CD8-positive, alpha-beta memory T cell (primary cell): ENCODE measurements at regions of chr14 and their contacts with region 1.

Region 1: GRCh38 chr14:21014761-21015190 is 10.1 kb downstream of the NDRG2 start:
- DNase-seq: peak; percentile 66 to 86 (median 75)
- H3K4me3 ChIP-seq: no peak overlapping the region
- H3K4me3 Mint-ChIP-seq: no peak overlapping the region
- H3K27ac ChIP-seq: no peak overlapping the region
- H3K27ac Mint-ChIP-seq: peak overlapping the region in 1 of 8 donors; percentile 8
- H3K4me1 ChIP-seq: no peaks in the 10 kb centered on the region
- H3K4me1 Mint-ChIP-seq: no peaks in the 10 kb centered on the region
- H3K27me3 ChIP-seq: no peaks in the 10 kb centered on the region
- H3K27me3 Mint-ChIP-seq: peaks cover 14 to 23% of the 10 kb centered on the region in 2 donors

Region 2: DNA sequence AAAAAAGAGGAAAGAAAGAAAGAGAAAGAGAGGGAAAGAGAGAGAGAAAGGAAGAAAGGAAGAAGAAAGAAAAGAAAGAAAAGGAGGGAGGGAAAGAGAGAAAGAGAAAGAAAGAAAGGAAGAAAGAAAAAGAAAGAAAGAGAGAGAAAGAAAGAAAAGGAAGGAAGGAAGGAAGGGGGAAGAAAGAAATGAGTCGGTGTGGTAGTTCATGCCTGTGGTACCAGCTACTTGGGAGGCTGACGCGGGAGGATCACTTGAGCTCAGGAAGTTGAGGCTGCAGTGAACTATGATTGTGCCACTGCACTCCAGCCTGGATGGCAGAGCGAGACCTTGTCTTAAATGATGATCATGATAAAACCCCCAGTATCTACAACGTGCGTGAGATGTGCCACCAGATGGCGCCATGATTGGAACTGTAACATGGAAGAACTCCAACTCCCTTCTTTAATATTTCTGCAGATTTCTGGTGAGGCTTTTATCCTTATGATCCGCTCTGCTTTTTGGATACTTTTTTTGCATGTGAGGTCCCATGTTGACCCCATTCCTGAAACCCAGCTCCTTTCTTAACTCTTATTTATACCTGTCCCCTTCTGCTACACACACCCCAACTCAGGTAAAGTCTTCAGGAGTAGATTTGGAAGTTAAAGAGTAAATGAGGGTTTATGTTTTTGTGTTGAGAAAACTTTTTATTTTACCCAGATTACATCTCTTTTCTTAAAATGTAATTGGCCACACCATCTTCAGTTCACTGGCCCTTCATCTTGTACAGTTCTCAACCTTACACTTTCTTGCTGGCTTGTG is 483.8 kb before region 1 on chr14:
- CTCF ChIA-PET with region 1: no interaction called
- POLR2A ChIA-PET with region 1: no interaction called
- DNase-seq: peak; percentile 39 to 80 (median 54)
- H3K4me3 ChIP-seq: no peak overlapping the region
- H3K4me3 Mint-ChIP-seq: peak overlapping the region in 3 of 7 donors; percentile 20 to 63 (median 22)
- H3K27ac ChIP-seq: no peak overlapping the region
- H3K27ac Mint-ChIP-seq: peak overlapping the region in 1 of 8 donors; percentile 43
- H3K4me1 ChIP-seq: peaks cover 8% of the 10 kb centered on the region
- H3K4me1 Mint-ChIP-seq: peaks cover 8 to 9% (median 8%) of the 10 kb centered on the region in 3 donors
- H3K27me3 ChIP-seq: no peaks in the 10 kb centered on the region
- H3K27me3 Mint-ChIP-seq: peaks cover 4 to 19% of the 10 kb centered on the region in 2 donors

Region 3: DNA sequence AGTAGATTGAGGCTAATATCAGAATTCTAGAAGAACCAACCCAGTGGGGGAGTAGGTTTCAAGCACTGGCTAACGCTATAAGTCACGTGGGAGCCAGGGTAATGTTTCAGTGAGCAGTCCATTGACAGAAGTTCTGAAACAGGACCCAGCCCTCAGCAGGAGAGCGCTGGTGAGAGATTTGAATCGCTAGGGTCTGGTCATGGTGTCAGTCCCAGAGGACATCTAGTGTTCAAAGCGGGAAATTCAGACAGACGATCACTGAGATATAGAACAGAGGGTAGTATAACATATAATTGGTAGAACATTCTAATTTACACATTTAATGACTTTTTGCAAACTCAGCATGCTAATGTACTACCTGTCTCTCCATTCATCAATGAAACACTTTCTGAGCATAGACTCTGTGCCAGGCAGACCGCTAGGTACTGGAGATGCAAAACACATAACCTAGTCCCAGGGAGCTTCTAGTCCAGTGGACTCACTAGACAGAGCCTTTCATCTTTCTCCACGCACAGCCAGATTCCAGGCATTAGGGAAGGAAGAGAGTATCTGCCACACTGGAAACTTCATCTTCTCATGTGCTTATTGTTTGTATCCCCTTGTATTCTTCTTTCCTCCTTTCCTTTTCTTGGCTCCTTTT is 159.0 kb before region 1 on chr14:
- CTCF ChIA-PET with region 1: no interaction called
- POLR2A ChIA-PET with region 1: no interaction called
- DNase-seq: peak in 4 of 5 donors; percentile 5 to 52 (median 38)
- H3K4me3 ChIP-seq: no peak overlapping the region
- H3K4me3 Mint-ChIP-seq: no peak overlapping the region
- H3K27ac ChIP-seq: no peak overlapping the region
- H3K27ac Mint-ChIP-seq: no peak overlapping the region
- H3K4me1 ChIP-seq: no peaks in the 10 kb centered on the region
- H3K4me1 Mint-ChIP-seq: peaks cover 0 to 5% (median 5%) of the 10 kb centered on the region in 3 donors
- H3K27me3 ChIP-seq: peaks cover 5% of the 10 kb centered on the region
- H3K27me3 Mint-ChIP-seq: peaks cover 14 to 32% of the 10 kb centered on the region in 2 donors

Region 4: GRCh38 chr14:20982646-20983369 is 32.0 kb before region 1 on chr14:
- CTCF ChIA-PET with region 1: no interaction called
- POLR2A ChIA-PET with region 1: no interaction called
- DNase-seq: no peak
- H3K4me3 ChIP-seq: no peak overlapping the region
- H3K4me3 Mint-ChIP-seq: no peak overlapping the region
- H3K27ac ChIP-seq: no peak overlapping the region
- H3K27ac Mint-ChIP-seq: no peak overlapping the region
- H3K4me1 ChIP-seq: no peaks in the 10 kb centered on the region
- H3K4me1 Mint-ChIP-seq: no peaks in the 10 kb centered on the region
- H3K27me3 ChIP-seq: peaks cover 3% of the 10 kb centered on the region
- H3K27me3 Mint-ChIP-seq: peaks cover 3 to 29% of the 10 kb centered on the region in 2 donors

Region 5: DNA sequence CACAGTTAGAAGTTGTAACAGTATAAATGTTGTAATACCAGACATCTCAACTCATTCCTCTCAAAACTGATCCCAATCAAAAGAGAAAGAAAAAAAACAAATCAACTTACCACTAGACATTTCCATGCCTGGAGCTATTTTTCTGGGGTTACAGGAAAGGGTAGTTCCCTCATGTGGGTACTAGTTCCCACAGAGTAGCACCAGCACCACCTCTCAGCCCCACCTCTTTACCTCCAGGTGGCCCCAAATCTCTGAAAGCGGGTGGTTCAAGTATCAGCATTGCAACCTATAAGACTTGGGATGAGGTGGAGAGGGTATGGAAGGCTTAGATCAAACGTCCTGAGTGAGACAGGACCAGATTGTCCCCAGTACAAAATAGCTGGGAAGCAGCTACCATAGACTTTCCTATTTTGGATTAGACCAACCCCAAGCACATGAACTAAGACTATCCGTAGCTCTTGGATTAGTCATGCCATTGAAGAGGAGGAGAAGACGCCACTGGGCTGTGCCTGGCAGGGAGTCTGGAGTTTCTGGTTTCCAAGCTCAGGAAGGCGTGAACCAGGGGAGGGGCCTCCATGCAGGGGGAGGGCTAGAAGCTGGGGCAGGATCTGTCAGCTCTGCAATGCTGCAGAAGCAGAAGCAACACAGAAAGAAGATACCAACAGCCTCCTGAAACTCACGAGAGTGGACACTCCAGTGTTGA is 16.0 kb before region 1 on chr14 and contains the start of gene SLC39A2:
- CTCF ChIA-PET with region 1: interaction called, 23 read pairs
- POLR2A ChIA-PET with region 1: no interaction called
- DNase-seq: no peak
- H3K4me3 ChIP-seq: no peak within 1 kb of the TSS
- H3K4me3 Mint-ChIP-seq: no peak within 1 kb of the TSS
- H3K27ac ChIP-seq: no peak within 1 kb of the TSS
- H3K27ac Mint-ChIP-seq: peak within 1 kb of the TSS in 4 of 8 donors; percentile 24 to 85 (median 30)
- H3K4me1 ChIP-seq: peaks cover 7% of the 10 kb centered on the region
- H3K4me1 Mint-ChIP-seq: peaks cover 0 to 1% (median 0%) of the 10 kb centered on the region in 3 donors
- H3K27me3 ChIP-seq: no peaks in the 10 kb centered on the region
- H3K27me3 Mint-ChIP-seq: peaks cover 0 to 2% of the 10 kb centered on the region in 2 donors
- total RNA-seq, gene SLC39A2: 0.16 TPM in 1 of 2 experiments, not detected in the other

Region 6: DNA sequence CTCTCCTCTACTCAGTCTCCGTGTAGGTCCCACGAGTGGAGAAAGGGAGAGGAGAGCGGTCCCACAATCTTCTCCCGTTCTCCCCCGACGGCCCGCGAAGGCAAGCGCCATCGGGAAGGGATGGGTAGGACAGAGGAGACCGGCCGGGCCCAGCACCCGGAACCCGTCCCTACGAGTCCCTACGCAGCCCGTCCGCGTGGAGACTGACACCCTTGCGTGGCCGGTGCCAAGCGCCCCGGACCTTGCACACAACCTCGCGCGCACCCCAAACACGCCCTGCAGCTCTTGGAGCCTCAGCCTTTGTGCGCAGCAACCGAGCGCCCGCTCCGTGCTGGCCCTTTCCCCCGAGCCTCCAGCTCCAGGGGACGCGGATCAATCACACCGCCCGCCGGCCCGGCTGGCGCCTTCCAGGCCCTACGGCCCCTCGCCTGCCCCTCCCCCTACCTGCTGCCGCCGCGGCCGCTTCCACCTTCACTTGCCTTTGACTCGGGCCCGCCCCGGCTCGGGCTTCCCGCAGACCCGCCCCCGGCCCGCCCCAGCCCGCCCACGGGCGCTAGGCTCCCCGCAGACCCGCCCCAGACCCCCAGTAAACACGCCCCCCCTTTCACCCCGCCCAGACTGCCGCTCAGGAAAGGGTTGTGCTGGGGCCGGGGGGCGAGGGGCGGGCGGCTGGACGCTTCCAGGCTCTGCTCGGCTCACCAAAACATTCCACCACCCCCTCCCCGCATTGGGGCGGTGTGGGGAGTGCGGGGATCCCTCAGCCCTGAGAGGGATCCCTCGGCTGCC is 10.0 kb after region 1 on chr14 and contains the start of gene NDRG2:
- CTCF ChIA-PET with region 1: interaction called, 17 read pairs
- POLR2A ChIA-PET with region 1: no interaction called
- DNase-seq: peak; percentile 66 to 86 (median 74)
- H3K4me3 ChIP-seq: peak within 1 kb of the TSS; percentile 71
- H3K4me3 Mint-ChIP-seq: peak within 1 kb of the TSS; percentile 82 to 95 (median 92)
- H3K27ac ChIP-seq: peak within 1 kb of the TSS; percentile 67
- H3K27ac Mint-ChIP-seq: peak within 1 kb of the TSS in 7 of 8 donors; percentile 51 to 96 (median 85)
- H3K4me1 ChIP-seq: peaks cover 13% of the 10 kb centered on the region
- H3K4me1 Mint-ChIP-seq: peaks cover 20 to 24% (median 23%) of the 10 kb centered on the region in 3 donors
- H3K27me3 ChIP-seq: no peaks in the 10 kb centered on the region
- H3K27me3 Mint-ChIP-seq: peaks cover 0 to 14% of the 10 kb centered on the region in 2 donors
- total RNA-seq, gene NDRG2: 4.8 to 5.0 TPM

Region 7: GRCh38 chr14:21049271-21049673 is 34.5 kb after region 1 on chr14:
- CTCF ChIA-PET with region 1: interaction called, 22 read pairs
- POLR2A ChIA-PET with region 1: no interaction called
- DNase-seq: no peak
- H3K4me3 ChIP-seq: no peak overlapping the region
- H3K4me3 Mint-ChIP-seq: no peak overlapping the region
- H3K27ac ChIP-seq: no peak overlapping the region
- H3K27ac Mint-ChIP-seq: no peak overlapping the region
- H3K4me1 ChIP-seq: peaks cover 3% of the 10 kb centered on the region
- H3K4me1 Mint-ChIP-seq: peaks cover 4 to 8% (median 6%) of the 10 kb centered on the region in 3 donors
- H3K27me3 ChIP-seq: no peaks in the 10 kb centered on the region
- H3K27me3 Mint-ChIP-seq: peaks cover 8 to 47% of the 10 kb centered on the region in 2 donors

Region 8: GRCh38 chr14:21084988-21085853 is 70.4 kb after region 1 on chr14:
- CTCF ChIA-PET with region 1: interaction called, 26 read pairs
- POLR2A ChIA-PET with region 1: no interaction called
- DNase-seq: no peak
- H3K4me3 ChIP-seq: no peak overlapping the region
- H3K4me3 Mint-ChIP-seq: peak overlapping the region in 1 of 7 donors; percentile 34
- H3K27ac ChIP-seq: no peak overlapping the region
- H3K27ac Mint-ChIP-seq: peak overlapping the region in 7 of 8 donors; percentile 20 to 97 (median 65)
- H3K4me1 ChIP-seq: peaks cover 18% of the 10 kb centered on the region
- H3K4me1 Mint-ChIP-seq: peaks cover 19 to 29% (median 28%) of the 10 kb centered on the region in 3 donors
- H3K27me3 ChIP-seq: no peaks in the 10 kb centered on the region
- H3K27me3 Mint-ChIP-seq: peaks cover 3 to 4% of the 10 kb centered on the region in 2 donors

Region 9: DNA sequence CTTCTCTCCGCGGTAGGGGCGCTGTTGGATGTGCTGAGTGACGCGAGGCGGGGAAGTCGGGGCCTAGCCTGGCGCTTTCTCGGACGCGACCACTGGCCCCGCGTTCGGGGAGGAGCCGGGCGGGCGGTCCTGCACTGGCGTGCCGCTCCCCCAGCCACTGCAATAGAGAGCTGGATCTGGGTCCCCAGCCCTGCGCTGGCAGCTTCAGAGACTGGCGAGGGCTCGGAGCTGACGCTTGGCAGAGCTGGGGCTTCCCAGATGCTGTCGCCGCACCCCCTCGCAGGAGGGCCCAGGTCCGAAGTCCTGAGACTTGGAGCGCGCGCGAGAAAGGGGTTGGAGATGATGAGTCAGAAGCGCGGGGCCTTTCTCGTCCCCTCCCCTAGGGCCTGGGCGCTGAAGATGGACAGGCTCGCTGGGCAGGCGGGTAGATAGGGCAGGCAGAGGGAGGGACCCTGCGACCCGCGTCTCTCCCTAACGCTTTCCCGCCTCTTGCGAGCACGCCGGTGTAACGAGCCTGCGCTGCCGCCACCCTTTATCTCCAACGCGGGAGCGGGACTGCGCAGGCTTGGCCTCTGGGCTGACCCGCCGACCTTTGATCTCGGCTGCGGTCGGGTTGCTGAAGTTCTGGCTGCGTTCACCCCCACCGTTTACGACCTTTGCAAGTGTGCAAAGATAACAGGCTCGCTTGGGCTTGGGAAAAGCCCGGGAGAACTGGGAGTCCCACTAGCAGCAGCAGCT is 89.1 kb after region 1 on chr14:
- CTCF ChIA-PET with region 1: interaction called, 201 read pairs
- POLR2A ChIA-PET with region 1: interaction called, 11 read pairs
- DNase-seq: peak; percentile 87 to 95 (median 91)
- H3K4me3 ChIP-seq: peak overlapping the region; percentile 99
- H3K4me3 Mint-ChIP-seq: peak overlapping the region; percentile 79 to 96 (median 88)
- H3K27ac ChIP-seq: peak overlapping the region; percentile 98
- H3K27ac Mint-ChIP-seq: peak overlapping the region; percentile 82 to 99 (median 93)
- H3K4me1 ChIP-seq: peaks cover 22% of the 10 kb centered on the region
- H3K4me1 Mint-ChIP-seq: peaks cover 19 to 31% (median 22%) of the 10 kb centered on the region in 3 donors
- H3K27me3 ChIP-seq: no peaks in the 10 kb centered on the region
- H3K27me3 Mint-ChIP-seq: peaks cover 11% of the 10 kb centered on the region in 2 donors